CD4-positive, alpha-beta T cell (primary cell): ENCODE measurements at regions of chr12 and their contacts with region 1.

Region 1: DNA sequence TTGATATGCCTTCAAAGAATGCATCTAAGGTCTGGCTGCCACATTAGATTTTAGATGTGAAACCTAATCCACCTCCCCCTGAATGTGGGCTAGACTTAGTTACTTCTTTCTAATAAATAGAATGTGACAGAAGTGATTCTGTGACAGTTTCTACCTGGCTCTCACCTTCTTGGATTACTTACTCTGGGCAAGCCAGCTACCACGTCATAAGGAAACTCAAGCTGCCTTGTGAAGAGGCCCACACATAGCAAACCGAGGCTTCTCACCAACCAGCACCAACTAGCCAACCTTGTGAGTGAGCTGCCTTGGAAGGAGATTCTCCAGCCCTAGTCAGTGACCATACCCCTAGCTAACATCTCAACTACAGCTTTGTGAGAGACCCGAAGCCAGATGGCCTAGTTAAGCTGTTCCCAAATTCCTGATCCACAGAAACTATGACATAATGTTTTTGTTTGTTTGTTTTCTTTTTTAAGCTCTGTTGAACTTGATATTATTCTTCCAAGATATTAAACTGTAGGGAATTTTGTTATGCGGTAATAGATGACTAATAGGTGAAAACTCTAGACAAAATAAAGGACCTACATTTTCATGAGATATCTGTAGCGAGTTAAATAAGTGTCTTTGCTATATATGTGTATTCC is 6.2 kb downstream of the GPR19 start:
- DNase-seq: no peak
- ATAC-seq: no peak
- H3K4me3 ChIP-seq: no peak overlapping the region
- H3K4me3 Mint-ChIP-seq: no peak overlapping the region
- H3K27ac ChIP-seq: no peak overlapping the region
- H3K27ac Mint-ChIP-seq: no peak overlapping the region
- H3K4me1 ChIP-seq: peaks cover 4% of the 10 kb centered on the region
- H3K4me1 Mint-ChIP-seq: peaks cover 21% of the 10 kb centered on the region
- H3K27me3 ChIP-seq: no peaks in the 10 kb centered on the region
- H3K27me3 Mint-ChIP-seq: no peaks in the 10 kb centered on the region
- CTCF ChIP-seq: no peak

Region 2: GRCh38 chr12:12654691-12655460 is 34.9 kb before region 1 on chr12:
- CTCF ChIA-PET with region 1: interaction called, 3 read pairs
- POLR2A ChIA-PET with region 1: no interaction called
- intact Hi-C with region 1: loop called in 1 of 2 experiments (anchors 5 kb)
- DNase-seq: no peak
- ATAC-seq: no peak
- H3K4me3 ChIP-seq: no peak overlapping the region
- H3K4me3 Mint-ChIP-seq: no peak overlapping the region
- H3K27ac ChIP-seq: no peak overlapping the region
- H3K27ac Mint-ChIP-seq: no peak overlapping the region
- H3K4me1 ChIP-seq: peaks cover 8% of the 10 kb centered on the region
- H3K4me1 Mint-ChIP-seq: peaks cover 17% of the 10 kb centered on the region
- H3K27me3 ChIP-seq: no peaks in the 10 kb centered on the region
- H3K27me3 Mint-ChIP-seq: no peaks in the 10 kb centered on the region
- CTCF ChIP-seq: no peak